A549 (cell line): ENCODE measurements at regions of chr12 and their contacts with region 1.

Region 1: GRCh38 chr12:48851883-48852733 is at the start of gene DDX23:
- DNase-seq: peak; percentile 98
- ATAC-seq: peak; percentile 95
- H3K4me3 ChIP-seq: peak within 1 kb of the TSS; percentile 91
- H3K27ac ChIP-seq: peak within 1 kb of the TSS; percentile 95 to 97
- H3K4me1 ChIP-seq: peaks cover 21% of the 10 kb centered on the region; the same call in 2 of the 3 replicates
- CTCF ChIP-seq: no peak
- EP300 ChIP-seq: no peak
- POLR2A ChIP-seq: peak; percentile 71
- RAD21 ChIP-seq: no peak
- polyA plus RNA-seq, gene DDX23: 132 TPM in 2 replicates

Region 2: DNA sequence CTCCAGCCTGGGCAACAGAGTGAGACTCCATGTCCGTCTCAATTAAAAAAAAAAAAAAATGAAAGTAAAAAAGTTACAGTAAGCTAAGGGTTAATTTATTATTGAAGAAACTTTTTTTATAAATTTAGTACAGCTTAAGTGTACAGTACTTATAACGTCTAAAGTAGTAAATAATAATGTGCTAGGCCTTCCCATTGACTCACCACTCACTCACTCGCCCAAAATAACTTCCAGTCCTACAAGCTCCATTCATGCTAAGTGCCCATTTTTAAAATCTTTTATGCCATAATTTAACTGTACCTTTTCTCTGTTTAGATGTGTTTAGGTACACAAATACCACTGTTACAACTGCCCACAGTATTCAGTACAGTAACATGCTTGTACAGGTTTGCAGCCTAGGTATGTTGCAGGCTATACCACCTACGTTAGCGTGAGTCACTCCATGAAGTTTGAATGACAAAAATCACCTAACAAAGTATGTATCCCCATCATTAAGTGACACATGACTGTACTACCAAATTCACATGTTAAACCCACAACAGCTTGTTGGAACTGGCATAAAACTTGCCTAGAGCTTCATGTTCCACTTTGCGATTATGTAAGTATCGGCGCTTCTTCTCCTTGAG is 180.8 kb before region 1 on chr12:
- CTCF ChIA-PET with region 1: no interaction called
- POLR2A ChIA-PET with region 1: no interaction called
- DNase-seq: no peak
- ATAC-seq: peak in 1 of 2 experiments; percentile 42; a peak in 2 of 6 replicates
- H3K4me3 ChIP-seq: no peak overlapping the region
- H3K27ac ChIP-seq: no peak overlapping the region
- H3K4me1 ChIP-seq: no peaks in the 10 kb centered on the region
- CTCF ChIP-seq: no peak
- EP300 ChIP-seq: no peak
- POLR2A ChIP-seq: no peak
- RAD21 ChIP-seq: no peak

Region 3: DNA sequence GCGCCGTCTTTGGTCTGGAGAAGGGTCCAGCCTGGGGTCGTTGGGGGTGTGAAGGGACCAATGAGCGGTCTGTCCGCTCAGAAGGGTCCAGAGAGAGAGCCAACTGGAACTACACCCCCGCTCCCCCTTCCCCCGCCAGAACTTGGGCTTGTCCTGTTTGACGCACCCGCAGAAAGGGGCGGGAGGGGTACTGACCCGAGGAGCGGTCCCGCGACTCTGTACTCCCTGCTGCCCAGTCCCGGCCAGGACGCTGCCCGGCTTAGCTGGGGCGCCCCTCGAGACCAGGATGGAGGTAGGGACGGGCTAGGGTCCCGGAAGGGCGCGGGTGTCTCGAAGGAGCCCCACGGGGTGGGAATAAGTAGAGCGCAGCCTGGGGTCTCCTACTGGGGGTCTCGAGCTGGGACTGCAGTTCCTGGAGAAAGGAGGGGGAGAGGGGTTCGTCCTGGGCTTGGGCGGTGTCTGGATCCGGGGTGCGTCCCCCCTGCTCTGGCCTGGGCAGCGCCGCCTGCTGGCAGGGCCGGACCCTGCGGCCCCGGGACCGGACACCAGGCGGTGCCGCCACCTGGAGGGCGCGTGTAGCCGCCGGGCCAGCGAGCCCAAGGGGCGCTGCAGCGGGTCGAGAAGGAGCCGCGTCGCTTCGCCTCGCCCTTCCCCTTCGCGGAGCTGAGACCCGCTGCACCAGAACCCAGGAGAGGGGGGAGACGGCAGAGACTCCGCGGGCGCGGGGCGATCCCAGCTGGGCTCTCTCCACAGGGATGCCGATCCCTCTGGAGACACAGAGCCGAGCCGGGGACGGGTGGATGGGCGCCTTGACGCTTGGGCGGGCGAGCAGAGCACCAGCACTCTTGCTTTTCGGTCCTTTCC is 37.6 kb before region 1 on chr12:
- CTCF ChIA-PET with region 1: interaction called, 67 read pairs
- POLR2A ChIA-PET with region 1: interaction called, 3 read pairs
- DNase-seq: peak; percentile 82 to 87
- ATAC-seq: peak; percentile 69 to 84
- H3K4me3 ChIP-seq: peak overlapping the region; percentile 81
- H3K27ac ChIP-seq: peak overlapping the region; percentile 93 to 95
- H3K4me1 ChIP-seq: peaks cover 48% of the 10 kb centered on the region
- CTCF ChIP-seq: peak; percentile 99
- EP300 ChIP-seq: no peak
- POLR2A ChIP-seq: peak; percentile 46
- RAD21 ChIP-seq: peak; percentile 43 to 62; a peak in 4 of 5 replicates

Region 4: DNA sequence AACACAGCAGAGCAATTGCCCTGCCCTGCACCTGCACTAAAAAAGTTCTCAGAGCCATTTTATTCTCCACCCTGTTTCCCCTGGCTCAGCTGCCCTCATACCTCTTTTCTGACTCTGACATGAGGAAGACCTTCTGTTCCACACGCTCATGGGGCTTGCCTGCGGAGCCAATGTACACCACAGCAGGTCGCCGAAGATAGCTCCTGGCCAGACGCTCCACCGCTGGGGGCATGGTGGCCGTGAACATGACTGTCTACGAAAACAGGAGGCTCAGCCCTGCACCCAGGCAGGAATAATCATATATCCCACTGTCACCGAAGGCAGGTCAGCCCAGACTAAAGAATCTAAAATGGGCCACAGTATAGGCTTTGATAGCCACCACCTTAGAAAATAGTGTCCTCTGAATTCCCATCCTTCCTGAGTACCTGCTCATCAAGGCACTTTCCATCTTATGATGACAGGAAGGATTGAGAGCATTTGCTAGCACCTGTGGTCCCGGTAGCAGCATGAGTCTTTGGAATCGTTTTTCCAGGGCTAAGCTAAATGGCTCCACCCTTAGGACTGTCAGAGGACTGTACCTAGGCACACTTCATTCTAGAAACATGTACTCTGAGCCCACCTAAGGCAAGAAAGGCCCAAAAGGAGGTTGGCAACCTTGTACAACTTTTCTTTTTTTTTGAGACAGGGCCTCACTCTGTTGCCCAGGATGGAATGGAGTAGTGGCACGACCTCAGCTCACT is 19.6 kb before region 1 on chr12:
- CTCF ChIA-PET with region 1: interaction called, 26 read pairs
- POLR2A ChIA-PET with region 1: interaction called, 5 read pairs
- DNase-seq: no peak
- ATAC-seq: no peak
- H3K4me3 ChIP-seq: no peak overlapping the region
- H3K27ac ChIP-seq: no peak overlapping the region
- H3K4me1 ChIP-seq: 0 out of 3 replicates have a peak, but pooled peaks cover 4% of the 10 kb centered on the region
- CTCF ChIP-seq: no peak
- EP300 ChIP-seq: no peak
- POLR2A ChIP-seq: no peak
- RAD21 ChIP-seq: no peak

Region 5: DNA sequence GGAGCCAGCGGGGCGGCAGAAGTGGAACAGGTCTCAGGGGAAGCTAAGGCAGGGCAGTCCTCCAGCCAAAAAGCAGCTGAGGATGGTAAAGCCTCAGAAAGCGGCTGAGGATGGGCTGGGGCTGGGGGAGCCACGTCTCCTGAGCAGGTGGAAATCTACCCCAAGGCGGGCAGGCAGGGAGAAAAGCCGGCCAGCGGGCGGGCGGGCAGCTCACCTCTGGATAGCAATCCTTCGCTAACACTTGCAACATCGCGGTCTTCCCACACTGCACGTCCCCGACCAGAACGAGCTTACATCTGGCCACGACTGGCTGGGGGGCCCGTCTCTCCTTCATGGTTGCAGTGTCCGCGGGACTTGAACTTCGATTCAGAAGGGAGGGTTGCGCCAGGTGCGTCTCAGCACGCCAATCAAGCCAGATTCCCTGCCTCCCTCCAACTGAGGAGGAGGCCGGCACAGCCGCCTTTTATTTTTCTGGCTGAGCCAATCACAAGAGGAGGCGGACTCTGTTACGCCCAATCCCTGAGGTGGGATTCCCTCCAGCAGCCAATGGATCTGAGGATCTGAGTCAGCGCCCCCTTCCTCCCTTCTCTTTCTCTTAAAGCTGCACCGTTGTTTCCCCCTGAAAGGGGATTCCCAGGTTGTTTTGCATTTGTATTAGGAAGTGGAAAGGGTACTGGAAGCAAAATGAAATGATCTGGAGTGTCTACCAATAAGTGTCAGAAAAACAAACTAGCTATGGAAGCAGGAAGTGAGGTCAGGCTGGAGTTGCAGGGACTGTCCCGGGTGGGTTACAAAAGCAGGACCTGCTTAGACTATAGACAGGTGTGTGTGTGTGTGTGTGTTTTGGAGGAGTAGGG is 13.6 kb after region 1 on chr12 and contains the start of gene RND1:
- CTCF ChIA-PET with region 1: interaction called, 1,365 read pairs
- POLR2A ChIA-PET with region 1: interaction called, 126 read pairs
- DNase-seq: peak; percentile 93 to 98
- ATAC-seq: peak; percentile 87 to 89
- H3K4me3 ChIP-seq: peak within 1 kb of the TSS; percentile 68
- H3K27ac ChIP-seq: peak within 1 kb of the TSS; percentile 83 to 86
- H3K4me1 ChIP-seq: peaks cover 68% of the 10 kb centered on the region
- CTCF ChIP-seq: no peak
- EP300 ChIP-seq: no peak
- POLR2A ChIP-seq: peak; percentile 100
- RAD21 ChIP-seq: no peak
- polyA plus RNA-seq, gene RND1: 37.8 and 54.5 TPM in 2 replicates

Region 6: DNA sequence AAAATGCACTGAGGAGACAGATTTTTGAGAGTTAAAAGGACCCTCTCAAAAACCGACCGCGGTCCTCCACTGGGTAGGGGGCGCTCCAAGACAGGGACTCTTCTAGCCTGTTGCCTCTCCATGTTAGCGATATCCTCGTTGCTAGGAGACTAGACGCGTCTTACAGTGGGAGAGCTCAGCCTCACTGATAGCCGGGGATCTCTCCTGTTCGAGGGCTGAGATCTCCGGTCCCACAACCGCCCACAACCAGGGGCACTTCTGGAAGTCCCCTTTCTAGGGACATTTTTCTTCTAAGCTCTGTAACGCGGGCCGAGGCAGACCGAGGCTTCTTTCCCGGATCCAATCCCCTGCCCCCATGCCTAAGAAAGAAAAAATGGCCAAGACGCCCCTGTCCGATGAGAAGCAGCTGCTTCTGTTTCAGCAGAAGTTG is 51.9 kb after region 1 on chr12:
- CTCF ChIA-PET with region 1: interaction called, 65 read pairs
- POLR2A ChIA-PET with region 1: interaction called, 5 read pairs
- DNase-seq: peak; percentile 92 to 93
- ATAC-seq: peak; percentile 96 to 98
- H3K4me3 ChIP-seq: peak overlapping the region; percentile 52
- H3K27ac ChIP-seq: peak overlapping the region in 1 of 2 experiments; percentile 72; a peak in 3 of 6 replicates
- H3K4me1 ChIP-seq: peaks cover 14% of the 10 kb centered on the region; the same call in 2 of the 3 replicates
- CTCF ChIP-seq: peak; percentile 90
- EP300 ChIP-seq: no peak
- POLR2A ChIP-seq: no peak
- RAD21 ChIP-seq: peak in 1 of 2 experiments; percentile 10; a peak in 1 of 5 replicates

Region 7: DNA sequence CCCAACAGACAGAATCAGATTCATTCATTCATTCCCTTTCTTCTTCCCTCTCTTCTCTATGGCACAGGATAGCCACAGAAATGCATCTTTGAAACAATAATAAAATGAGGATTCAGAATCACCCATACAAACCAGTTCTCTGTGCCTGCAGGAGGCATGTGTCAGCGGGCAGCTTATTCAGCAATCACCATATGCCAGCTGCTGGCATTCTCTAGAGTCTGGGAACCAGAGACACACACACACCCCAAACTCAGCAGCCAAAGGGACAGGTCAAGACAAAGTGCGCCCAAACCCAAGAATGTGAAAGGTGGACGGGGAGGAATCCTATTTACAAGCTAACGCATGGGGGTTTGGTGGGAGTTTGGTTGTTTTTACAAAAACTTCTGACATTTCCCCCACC is 91.1 kb after region 1 on chr12:
- CTCF ChIA-PET with region 1: interaction called, 311 read pairs
- POLR2A ChIA-PET with region 1: interaction called, 5 read pairs
- DNase-seq: no peak
- ATAC-seq: no peak
- H3K4me3 ChIP-seq: no peak overlapping the region
- H3K27ac ChIP-seq: no peak overlapping the region
- H3K4me1 ChIP-seq: no peaks in the 10 kb centered on the region
- CTCF ChIP-seq: no peak
- EP300 ChIP-seq: no peak
- POLR2A ChIP-seq: no peak
- RAD21 ChIP-seq: no peak

Region 8: GRCh38 chr12:48988030-48988649 is 136.0 kb after region 1 on chr12:
- CTCF ChIA-PET with region 1: interaction called, 41 read pairs
- POLR2A ChIA-PET with region 1: interaction called, 8 read pairs
- DNase-seq: peak; percentile 66 to 68
- ATAC-seq: peak; percentile 64 to 87
- H3K4me3 ChIP-seq: no peak overlapping the region
- H3K27ac ChIP-seq: no peak overlapping the region
- H3K4me1 ChIP-seq: 0 out of 3 replicates have a peak, but pooled peaks cover 5% of the 10 kb centered on the region
- CTCF ChIP-seq: peak; percentile 80
- EP300 ChIP-seq: no peak
- POLR2A ChIP-seq: no peak
- RAD21 ChIP-seq: peak; percentile 15 to 44; a peak in 2 of 5 replicates